Calu3 (cell line): ENCODE measurements at regions of chr17 and their contacts with region 1.

Region 1: GRCh38 chr17:28967221-28968140 is 16.2 kb upstream of the PHF12 start:
- DNase-seq: no peak
- H3K4me3 Mint-ChIP-seq: no peak overlapping the region
- H3K27ac Mint-ChIP-seq: no peak overlapping the region
- H3K4me1 Mint-ChIP-seq: peaks cover 10% of the 10 kb centered on the region
- H3K27me3 Mint-ChIP-seq: peaks cover 64% of the 10 kb centered on the region
- CTCF ChIP-seq: no peak

Region 2: DNA sequence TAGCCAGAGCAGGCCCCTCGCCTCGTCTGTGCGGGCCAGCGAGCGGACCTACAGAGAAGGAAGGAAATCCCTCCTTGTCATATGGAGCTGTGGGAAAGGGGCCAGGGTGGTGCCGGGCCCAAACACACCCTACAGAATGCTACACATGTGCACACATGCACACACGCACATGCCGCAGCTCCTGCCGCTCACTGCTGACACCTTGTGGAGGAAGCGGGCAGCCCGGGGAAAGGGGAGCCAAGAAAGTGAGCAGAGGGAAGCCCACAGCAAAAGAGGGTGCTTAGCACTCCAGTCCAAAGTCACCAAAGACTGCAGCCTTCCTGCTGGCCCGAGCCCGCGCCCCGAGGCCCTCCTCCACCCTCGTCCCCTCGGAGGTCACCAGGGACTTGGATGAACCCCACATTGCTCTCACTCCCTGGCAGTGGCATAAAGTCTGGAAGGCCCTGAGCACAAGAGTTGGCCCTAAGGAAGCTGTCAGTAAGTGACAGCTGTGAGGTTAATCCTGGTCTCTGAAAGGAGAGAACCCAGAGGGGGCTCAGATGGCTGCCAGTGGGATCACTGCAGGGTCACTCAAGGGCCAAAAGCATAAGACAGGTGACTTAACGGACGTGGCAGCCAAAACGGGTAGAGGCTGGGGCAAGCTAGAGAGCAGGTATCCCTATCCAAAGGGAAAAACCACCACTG is 144.5 kb after region 1 on chr17:
- CTCF ChIA-PET with region 1: interaction called, 85 read pairs
- intact Hi-C with region 1: loop called (anchors 2 kb)
- DNase-seq: peak; percentile 82
- H3K4me3 Mint-ChIP-seq: no peak overlapping the region
- H3K27ac Mint-ChIP-seq: no peak overlapping the region
- H3K4me1 Mint-ChIP-seq: peaks cover 20% of the 10 kb centered on the region
- H3K27me3 Mint-ChIP-seq: no peaks in the 10 kb centered on the region
- CTCF ChIP-seq: peak; percentile 87

Region 3: DNA sequence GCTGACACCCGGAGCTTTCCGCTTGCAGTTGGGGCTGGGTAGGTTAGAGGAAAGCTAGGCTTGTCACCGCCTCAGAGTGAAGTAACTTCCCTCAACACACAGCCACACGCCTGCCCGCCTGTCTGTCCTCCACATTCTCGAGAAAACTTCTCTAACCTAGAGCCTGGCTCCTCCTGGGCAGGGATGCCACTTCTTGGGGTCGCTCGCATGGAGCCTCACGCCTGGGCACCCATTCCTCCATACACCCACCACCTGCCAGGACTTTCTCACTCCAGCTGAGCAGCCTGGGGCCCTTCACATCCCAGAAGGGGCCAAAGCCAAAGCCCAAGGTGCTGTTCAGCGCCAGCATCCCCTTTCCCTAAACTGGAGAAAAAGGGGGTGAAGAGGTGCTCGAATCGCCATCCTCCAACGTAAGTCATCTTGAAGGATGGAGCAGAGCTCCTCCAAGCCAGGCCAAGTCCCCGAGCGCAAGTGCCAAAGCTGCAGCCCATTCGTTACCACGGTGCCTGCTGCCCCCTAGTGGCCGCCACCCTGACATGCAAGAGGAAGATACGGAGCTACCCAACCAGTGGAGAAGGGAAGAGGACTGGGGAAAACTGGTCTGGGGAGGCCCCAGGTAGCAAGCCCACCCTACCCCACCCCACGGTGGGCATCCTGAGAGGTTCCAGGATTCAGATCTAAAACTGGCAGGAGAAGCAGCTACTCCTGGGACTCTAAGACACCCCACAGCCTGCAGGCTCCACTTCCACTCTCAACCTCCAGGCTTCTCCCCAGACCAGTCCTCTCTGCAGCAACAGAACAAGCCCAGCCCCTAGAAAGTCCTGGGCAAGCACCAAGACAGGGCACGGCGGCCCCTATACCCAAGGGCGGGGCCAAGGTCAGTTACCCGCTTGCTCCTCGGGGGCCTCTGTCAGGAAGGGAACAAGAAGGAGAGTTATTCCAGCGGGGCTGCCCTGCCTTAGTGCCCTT is 149.6 kb after region 1 on chr17:
- CTCF ChIA-PET with region 1: interaction called, 85 read pairs
- intact Hi-C with region 1: loop called (anchors 2 kb)
- DNase-seq: peak; percentile 84
- H3K4me3 Mint-ChIP-seq: no peak overlapping the region
- H3K27ac Mint-ChIP-seq: no peak overlapping the region
- H3K4me1 Mint-ChIP-seq: no peaks in the 10 kb centered on the region
- H3K27me3 Mint-ChIP-seq: no peaks in the 10 kb centered on the region
- CTCF ChIP-seq: peak; percentile 85

Region 4: GRCh38 chr17:29158488-29159275 is 191.2 kb after region 1 on chr17:
- CTCF ChIA-PET with region 1: no interaction called
- intact Hi-C with region 1: no loop called
- DNase-seq: peak; percentile 59
- H3K4me3 Mint-ChIP-seq: peak overlapping the region; percentile 45
- H3K27ac Mint-ChIP-seq: peak overlapping the region; percentile 63
- H3K4me1 Mint-ChIP-seq: peaks cover 83% of the 10 kb centered on the region
- H3K27me3 Mint-ChIP-seq: no peaks in the 10 kb centered on the region
- CTCF ChIP-seq: no peak

Region 5: DNA sequence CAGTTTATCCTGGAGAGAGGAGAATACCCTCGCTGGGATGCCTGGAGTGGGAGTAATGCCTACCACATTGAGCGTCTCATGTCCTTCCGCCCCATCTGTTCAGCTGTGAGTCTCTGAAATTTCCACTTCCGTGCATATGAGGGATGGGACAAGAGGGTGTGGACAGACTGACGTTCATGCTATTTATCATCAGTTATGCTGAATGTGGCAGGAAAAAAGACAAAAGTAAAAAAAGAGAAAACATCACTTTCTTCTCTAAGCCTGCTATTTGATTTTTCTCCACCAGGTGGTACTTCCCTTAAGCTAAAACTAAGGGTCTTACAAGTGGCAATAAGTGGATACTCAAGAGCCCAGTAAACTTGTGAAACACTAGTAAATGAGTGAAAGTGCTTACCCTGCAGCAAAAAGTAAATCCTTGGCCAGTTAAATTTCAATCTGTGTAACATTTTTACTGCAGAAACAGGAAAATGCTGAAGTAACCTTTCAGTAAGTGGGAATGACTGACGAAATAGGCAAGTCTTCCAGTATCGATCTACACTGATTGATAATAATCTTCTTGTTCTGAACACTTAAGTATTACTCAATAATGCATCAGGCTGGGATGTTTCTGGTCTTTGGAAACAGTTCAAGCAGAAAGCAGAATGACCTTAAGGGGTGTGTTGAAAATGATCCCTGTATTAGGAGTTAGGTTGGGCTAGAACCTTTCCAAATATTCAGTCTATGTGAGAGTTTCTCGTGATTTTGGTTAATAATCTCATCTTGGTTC is 284.8 kb after region 1 on chr17:
- CTCF ChIA-PET with region 1: no interaction called
- intact Hi-C with region 1: no loop called
- DNase-seq: no peak
- H3K4me3 Mint-ChIP-seq: no peak overlapping the region
- H3K27ac Mint-ChIP-seq: no peak overlapping the region
- H3K4me1 Mint-ChIP-seq: peaks cover 14% of the 10 kb centered on the region
- H3K27me3 Mint-ChIP-seq: no peaks in the 10 kb centered on the region
- CTCF ChIP-seq: peak; percentile 2